ENCODE measurements at regions of chr2 and their contacts with region 1.

Region 1: GRCh38 chr2:28269019-28269784 is 123.5 kb upstream of the FOSL2 start:
- DNase-seq: peak in 1 of 3 donors; percentile 70
- ATAC-seq: peak; percentile 88
- H3K4me3 ChIP-seq: no peak overlapping the region
- H3K4me1 ChIP-seq: peaks cover 33% of the 10 kb centered on the region
- CTCF ChIP-seq: no peak

Region 2: DNA sequence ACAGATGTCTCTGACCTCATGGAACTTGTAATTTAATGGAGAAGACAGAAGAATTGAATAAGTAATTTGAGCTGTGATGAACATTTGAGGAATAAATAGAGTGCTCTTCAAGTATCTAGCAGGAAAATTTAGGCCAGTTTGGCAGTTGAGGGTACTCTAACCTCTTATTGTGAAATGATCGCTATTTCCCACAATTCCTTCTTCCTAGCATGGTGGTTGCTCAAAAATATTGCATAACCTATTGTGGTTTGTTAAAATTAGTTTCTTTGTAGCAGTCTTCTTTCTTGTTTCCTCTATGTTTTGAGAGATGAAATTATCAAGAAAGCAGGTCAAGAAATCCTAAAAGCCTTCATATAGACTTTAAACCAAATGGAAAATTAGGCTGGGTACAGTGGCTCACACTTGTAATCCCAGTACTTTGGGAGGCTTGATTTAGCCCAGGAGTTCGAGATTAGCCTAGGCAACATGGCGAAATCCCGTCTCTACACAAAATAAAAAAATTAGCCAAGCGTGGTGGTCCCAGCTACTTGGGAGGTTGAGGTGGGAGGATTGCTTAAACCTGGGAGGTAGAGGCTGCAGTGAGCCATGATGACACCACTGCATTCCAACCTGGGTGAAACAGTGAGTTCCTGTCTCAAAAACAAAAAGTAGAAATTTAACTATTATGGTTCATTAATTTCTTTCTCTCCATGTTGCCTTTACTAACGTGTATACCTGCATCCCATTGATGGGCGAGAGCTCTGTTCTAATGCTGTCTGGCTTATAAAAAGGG is 437.7 kb before region 1 on chr2:
- intact Hi-C with region 1: no loop called
- DNase-seq: no peak
- ATAC-seq: no peak
- H3K4me3 ChIP-seq: no peak overlapping the region
- H3K4me1 ChIP-seq: no peaks in the 10 kb centered on the region
- CTCF ChIP-seq: no peak

Region 3: DNA sequence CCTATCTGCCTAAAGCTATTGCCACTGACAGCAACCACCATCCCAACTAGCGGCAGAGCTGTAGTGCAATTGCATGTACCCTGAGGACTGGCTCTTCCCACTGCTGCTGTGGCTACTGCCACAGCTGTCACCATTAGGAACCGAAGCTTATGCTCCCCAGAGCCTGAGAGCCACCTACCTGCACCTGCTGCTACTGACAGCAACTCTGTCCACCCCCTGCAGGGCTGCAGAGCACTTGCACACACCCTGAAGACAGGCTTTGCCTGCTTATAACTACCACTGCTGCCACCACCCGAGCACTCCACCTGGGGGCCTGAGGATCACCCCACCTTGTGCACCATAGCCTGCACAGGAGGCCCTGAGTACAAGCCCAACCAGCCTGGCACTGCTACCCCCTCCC is 94.2 kb before region 1 on chr2:
- intact Hi-C with region 1: no loop called
- DNase-seq: peak in 1 of 3 donors; percentile 30
- ATAC-seq: peak; percentile 57
- H3K4me3 ChIP-seq: no peak overlapping the region
- H3K4me1 ChIP-seq: peaks cover 6% of the 10 kb centered on the region
- CTCF ChIP-seq: no peak

Region 4: GRCh38 chr2:28395334-28396061 is 126.3 kb after region 1 on chr2:
- intact Hi-C with region 1: loop called in 1 of 2 experiments (anchors 5 kb)
- DNase-seq: peak; percentile 61 to 69 (median 69)
- ATAC-seq: peak; percentile 1
- H3K4me3 ChIP-seq: peak overlapping the region; percentile 96
- H3K4me1 ChIP-seq: peaks cover 37% of the 10 kb centered on the region
- CTCF ChIP-seq: no peak

Measured in mucosa of descending colon (tissue), 3 donors.